ENCODE measurements at regions of chr3 and their contacts with region 1.

Region 1: DNA sequence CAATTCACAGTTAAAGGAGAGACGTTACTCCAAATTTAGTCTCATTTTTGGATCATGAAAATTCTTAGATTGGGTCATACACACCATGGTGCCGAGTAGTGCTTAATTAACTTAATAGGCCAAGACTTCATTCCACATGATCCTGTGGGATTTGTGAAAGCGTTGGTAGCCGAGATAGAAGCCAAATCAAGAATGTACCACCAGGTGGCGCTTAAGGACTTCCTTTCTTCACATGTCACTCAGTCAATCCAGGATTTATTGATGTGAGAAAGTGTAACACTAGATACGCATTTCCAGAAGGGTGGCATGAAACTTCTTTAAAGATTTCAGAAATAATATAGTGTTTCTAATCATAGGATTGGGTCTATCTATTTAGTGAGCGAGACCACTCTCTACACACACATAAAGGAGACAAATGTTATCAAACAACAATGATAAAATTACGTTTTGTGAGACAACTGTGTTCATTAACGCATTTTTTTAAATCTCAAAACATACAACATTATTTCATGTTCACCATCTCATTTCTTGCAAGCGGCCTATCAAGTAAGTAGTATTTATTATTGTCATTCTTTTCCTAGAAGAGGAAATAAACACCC is 436.1 kb downstream of the CHL1 start:
- DNase-seq: peak in 7 of 10 donors; percentile 30 to 71 (median 64)

Region 2: DNA sequence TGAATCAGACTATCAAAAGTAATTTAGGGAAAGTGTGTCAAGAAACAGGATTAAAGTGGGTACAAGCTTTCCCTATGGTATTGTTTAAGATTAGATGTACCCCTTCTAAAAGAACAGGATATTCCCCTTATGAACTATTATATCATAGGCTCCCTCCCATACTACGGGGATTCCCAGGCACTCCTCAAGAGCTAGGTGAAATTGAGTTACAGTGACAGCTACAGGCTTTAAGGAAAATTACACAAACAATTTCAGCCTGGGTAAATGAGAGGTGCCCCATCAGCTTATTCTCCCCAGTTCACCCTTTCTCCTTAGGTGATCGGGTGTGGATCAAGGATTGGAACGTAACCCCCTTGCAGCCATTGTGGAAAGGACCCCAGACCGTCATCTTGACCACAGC is 219.4 kb after region 1 on chr3:
- intact Hi-C with region 1: loop called (anchors 2 kb)
- DNase-seq: no peak

Measured in posterior cingulate gyrus (tissue), 11 donors.